ENCODE measurements at regions of chr15 and their contacts with region 1.

Region 1: GRCh38 chr15:66946578-66947164 is 118.7 kb upstream of the SMAD3 start:
- DNase-seq: peak in 1 of 2 experiments; percentile 84
- H3K4me3 ChIP-seq: no peak overlapping the region
- H3K27ac ChIP-seq: no peak overlapping the region
- H3K4me1 ChIP-seq: peaks cover 0 to 3% (median 0%) of the 10 kb centered on the region in 4 experiments; a peak in 3 of 7 replicates
- H3K27me3 ChIP-seq: no peaks in the 10 kb centered on the region
- CTCF ChIP-seq: peak; percentile 84 to 90 (median 89)
- EP300 ChIP-seq: no peak
- POLR2A ChIP-seq: no peak
- RAD21 ChIP-seq: peak; percentile 97 to 99

Region 2: GRCh38 chr15:66907826-66908743 is 38.6 kb before region 1 on chr15:
- CTCF ChIA-PET with region 1: interaction called, 12 read pairs
- POLR2A ChIA-PET with region 1: no interaction called
- DNase-seq: no peak
- H3K4me3 ChIP-seq: no peak overlapping the region
- H3K27ac ChIP-seq: no peak overlapping the region
- H3K4me1 ChIP-seq: peaks cover 0 to 3% (median 0%) of the 10 kb centered on the region in 4 experiments; a peak in 1 of 7 replicates
- H3K27me3 ChIP-seq: no peaks in the 10 kb centered on the region
- CTCF ChIP-seq: no peak
- EP300 ChIP-seq: no peak
- POLR2A ChIP-seq: no peak
- RAD21 ChIP-seq: no peak

Region 3: GRCh38 chr15:66966257-66966656 is 19.6 kb after region 1 on chr15:
- CTCF ChIA-PET with region 1: interaction called, 13 read pairs
- POLR2A ChIA-PET with region 1: no interaction called
- DNase-seq: no peak
- H3K4me3 ChIP-seq: no peak overlapping the region
- H3K27ac ChIP-seq: no peak overlapping the region
- H3K4me1 ChIP-seq: peaks cover 0 to 3% (median 0%) of the 10 kb centered on the region in 4 experiments; a peak in 1 of 7 replicates
- H3K27me3 ChIP-seq: no peaks in the 10 kb centered on the region
- CTCF ChIP-seq: peak in 1 of 3 experiments; percentile 36; a peak in 1 of 4 replicates
- EP300 ChIP-seq: no peak
- POLR2A ChIP-seq: no peak
- RAD21 ChIP-seq: peak; percentile 26 to 31; a peak in 3 of 4 replicates

Region 4: GRCh38 chr15:67188551-67189218 is 242.0 kb after region 1 on chr15:
- CTCF ChIA-PET with region 1: interaction called, 14 read pairs
- POLR2A ChIA-PET with region 1: no interaction called
- DNase-seq: no peak
- H3K4me3 ChIP-seq: no peak overlapping the region
- H3K27ac ChIP-seq: no peak overlapping the region
- H3K4me1 ChIP-seq: no peaks in the 10 kb centered on the region
- H3K27me3 ChIP-seq: no peaks in the 10 kb centered on the region
- CTCF ChIP-seq: no peak
- EP300 ChIP-seq: no peak
- POLR2A ChIP-seq: no peak
- RAD21 ChIP-seq: no peak

Region 5: DNA sequence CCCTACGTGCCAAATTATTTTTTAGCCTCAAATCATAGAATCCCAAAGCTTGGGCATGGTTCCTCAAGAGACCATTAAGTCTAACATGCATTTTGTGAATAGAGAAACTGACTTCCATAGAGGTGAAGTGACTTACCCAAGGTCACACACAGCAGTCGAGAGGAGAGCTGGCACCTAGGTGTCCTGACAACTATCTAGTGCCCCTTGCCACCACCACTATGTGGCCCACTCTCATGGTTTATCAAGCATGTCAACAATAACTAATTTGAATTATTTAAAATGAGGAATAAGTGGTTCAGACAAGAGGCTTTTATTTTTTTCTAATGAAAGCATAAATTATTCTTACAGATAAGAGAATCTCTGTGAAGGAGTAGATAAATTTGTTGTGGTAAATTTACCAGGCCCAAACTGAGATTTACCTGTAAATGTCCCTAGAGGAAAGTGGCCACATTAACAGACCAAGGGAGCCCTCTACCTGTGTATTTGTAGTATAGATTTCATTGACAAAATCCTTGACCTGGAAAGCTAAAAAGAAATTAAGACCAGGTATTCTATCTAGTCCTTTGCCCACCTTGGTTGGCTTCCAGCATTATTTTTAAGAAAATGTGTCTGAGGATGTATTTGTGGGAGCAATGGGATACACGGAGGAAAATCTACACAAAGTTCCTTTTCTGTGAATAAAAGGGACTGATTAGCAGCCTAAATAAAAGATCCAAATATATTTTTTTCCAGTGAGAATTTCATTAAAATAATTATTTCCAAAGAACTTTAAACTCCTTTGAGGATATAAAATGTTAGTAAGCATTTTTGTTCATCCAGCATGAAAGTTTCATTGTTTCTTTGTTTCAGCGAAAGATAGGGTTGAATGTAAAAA is 357.1 kb after region 1 on chr15:
- CTCF ChIA-PET with region 1: interaction called, 125 read pairs
- POLR2A ChIA-PET with region 1: no interaction called
- DNase-seq: no peak
- H3K4me3 ChIP-seq: no peak overlapping the region
- H3K27ac ChIP-seq: no peak overlapping the region
- H3K4me1 ChIP-seq: no peaks in the 10 kb centered on the region
- H3K27me3 ChIP-seq: no peaks in the 10 kb centered on the region
- CTCF ChIP-seq: peak in 2 of 3 experiments; percentile 51 to 66; a peak in 3 of 4 replicates
- EP300 ChIP-seq: no peak
- POLR2A ChIP-seq: no peak
- RAD21 ChIP-seq: peak; percentile 88 to 91

Region 6: DNA sequence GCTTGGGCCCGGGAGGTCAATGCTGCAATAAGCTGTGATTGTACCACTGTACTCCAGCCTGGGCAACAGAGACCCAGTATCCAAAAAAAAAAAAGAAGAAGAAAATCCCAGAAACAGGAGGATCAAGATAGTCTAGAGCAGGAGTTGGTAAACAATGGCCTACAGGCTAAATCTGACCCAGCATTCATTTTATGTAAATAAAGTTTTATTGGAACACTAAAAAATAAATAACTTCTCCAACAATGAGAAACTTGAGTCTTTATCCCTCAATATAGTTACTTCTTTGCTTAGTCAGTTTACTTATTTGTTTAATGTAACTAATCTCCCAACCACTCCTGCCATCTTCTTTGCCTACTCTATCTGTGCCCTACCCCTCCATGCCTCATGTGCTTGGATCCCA is 480.2 kb after region 1 on chr15:
- CTCF ChIA-PET with region 1: no interaction called
- POLR2A ChIA-PET with region 1: no interaction called
- DNase-seq: no peak
- H3K4me3 ChIP-seq: no peak overlapping the region
- H3K27ac ChIP-seq: no peak overlapping the region
- H3K4me1 ChIP-seq: no peaks in the 10 kb centered on the region
- H3K27me3 ChIP-seq: no peaks in the 10 kb centered on the region
- CTCF ChIP-seq: no peak
- EP300 ChIP-seq: no peak
- POLR2A ChIP-seq: no peak
- RAD21 ChIP-seq: no peak